Activated T-helper 1 cell treated with anti-CD3 and anti-CD28 coated beads, Interleukin-12 subunit alpha, Interleukin-12 subunit beta, Interleukin-2, Interleukin-4 antibody, amounts not matched to agents 30 ng/mL and 10 ng/mL and 1 ng/mL, durations not matched to agents 14 hours and 24 hours and 36 hours (primary cell): ENCODE measurements at regions of chr1 and their contacts with region 1.

Region 1: DNA sequence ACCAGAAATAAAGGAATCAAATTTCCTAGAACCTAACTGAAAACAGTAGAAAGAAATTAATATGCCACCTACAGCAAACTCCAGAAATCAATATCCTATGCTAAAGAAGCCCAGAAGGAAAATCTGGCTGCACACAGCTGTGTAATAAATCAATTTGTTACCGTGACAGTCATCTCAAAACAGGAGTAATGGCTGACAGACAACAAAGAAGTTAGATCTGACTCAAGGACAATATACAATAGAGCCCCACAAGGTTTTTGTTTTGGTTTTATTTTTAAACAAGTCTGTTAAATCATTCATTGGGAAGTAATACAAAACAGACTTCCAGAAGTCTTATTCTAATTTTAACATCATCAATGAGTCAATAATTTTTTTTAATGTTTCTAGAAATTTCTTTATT is 168.4 kb downstream of the RERE start:
- DNase-seq: no peak
- H3K4me3 Mint-ChIP-seq: no peak overlapping the region
- H3K27ac Mint-ChIP-seq: no peak overlapping the region
- H3K4me1 Mint-ChIP-seq: peaks cover 76% of the 10 kb centered on the region
- H3K27me3 Mint-ChIP-seq: no peaks in the 10 kb centered on the region

Region 2: DNA sequence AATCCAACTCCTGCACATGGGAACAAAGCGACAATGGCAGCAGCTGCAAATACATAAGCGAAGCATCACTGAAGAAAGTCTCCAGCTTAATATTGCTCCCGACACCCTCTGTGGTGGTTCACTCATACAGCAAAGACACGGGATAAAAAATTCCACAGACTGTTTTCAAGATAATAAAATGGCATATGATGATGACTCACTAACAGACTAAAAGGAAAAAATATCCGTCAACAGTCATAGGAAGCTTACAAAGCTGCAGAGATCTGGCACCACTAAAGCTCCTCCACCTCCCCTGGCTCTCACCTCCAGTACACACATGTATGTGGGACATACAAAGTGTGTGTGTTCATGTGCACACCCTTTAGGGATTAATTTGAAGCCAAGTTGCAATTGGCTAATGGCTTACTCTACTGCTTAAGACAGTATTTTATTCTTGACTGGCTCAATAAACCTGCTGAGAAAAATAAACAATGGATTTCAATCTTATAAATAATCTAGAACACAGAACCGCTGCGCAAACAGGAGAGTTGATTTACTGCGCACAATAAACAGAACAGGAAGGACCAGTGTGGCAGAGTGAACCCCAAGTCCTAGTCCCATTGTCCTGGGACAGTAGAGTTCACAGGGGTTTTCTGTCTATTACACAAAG is 236.7 kb before region 1 on chr1:
- intact Hi-C with region 1: no loop called
- DNase-seq: no peak
- H3K4me3 Mint-ChIP-seq: no peak overlapping the region
- H3K27ac Mint-ChIP-seq: no peak overlapping the region
- H3K4me1 Mint-ChIP-seq: peaks cover 49% of the 10 kb centered on the region
- H3K27me3 Mint-ChIP-seq: no peaks in the 10 kb centered on the region

Region 3: DNA sequence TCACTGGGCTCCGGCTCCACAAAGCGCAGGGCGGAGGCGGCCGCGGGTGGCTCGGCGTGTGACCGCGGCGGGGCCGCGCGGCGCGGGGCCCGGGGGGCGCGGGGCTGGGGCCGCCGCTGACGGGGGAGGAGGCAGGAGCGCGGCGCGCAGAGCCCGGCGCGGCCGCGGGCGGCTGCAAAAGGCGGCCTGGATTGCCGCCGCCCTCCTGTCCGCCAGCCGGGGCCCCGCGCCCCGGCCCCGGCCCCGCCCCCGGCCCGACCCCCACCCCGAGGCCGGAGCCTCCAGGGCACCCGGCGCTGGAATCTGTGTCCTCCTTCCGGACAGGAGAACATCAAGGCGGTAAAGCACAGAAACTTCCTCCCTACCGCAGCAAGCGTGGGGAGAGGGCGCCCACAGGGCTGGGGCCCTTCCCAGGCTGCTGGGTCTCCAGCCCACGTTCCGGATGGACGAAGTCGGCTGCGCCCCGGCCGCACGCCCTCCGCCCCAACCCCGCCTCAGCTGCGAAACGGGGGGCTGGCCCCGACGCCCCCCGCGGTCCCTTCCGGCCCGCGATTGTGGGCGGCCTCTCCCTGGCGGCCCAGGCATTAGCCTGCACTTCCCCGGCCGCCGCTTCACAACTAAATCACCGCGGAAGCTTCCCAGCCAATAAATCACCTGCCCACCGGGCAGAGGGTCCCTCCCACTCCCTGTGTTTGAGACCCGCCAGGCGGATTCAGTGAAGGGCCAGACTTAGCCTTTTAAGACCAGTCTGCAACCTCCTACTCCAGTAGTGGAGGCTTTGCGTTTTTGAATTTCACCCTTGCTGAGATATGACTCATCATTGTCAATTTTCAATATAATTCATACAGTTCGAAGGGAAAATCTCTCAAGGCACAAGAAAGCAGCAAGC is 225.1 kb before region 1 on chr1:
- intact Hi-C with region 1: loop called (anchors 5 kb)
- DNase-seq: peak; percentile 32
- H3K4me3 Mint-ChIP-seq: peak overlapping the region; percentile 91
- H3K27ac Mint-ChIP-seq: peak overlapping the region; percentile 92
- H3K4me1 Mint-ChIP-seq: peaks cover 44% of the 10 kb centered on the region
- H3K27me3 Mint-ChIP-seq: no peaks in the 10 kb centered on the region

Region 4: DNA sequence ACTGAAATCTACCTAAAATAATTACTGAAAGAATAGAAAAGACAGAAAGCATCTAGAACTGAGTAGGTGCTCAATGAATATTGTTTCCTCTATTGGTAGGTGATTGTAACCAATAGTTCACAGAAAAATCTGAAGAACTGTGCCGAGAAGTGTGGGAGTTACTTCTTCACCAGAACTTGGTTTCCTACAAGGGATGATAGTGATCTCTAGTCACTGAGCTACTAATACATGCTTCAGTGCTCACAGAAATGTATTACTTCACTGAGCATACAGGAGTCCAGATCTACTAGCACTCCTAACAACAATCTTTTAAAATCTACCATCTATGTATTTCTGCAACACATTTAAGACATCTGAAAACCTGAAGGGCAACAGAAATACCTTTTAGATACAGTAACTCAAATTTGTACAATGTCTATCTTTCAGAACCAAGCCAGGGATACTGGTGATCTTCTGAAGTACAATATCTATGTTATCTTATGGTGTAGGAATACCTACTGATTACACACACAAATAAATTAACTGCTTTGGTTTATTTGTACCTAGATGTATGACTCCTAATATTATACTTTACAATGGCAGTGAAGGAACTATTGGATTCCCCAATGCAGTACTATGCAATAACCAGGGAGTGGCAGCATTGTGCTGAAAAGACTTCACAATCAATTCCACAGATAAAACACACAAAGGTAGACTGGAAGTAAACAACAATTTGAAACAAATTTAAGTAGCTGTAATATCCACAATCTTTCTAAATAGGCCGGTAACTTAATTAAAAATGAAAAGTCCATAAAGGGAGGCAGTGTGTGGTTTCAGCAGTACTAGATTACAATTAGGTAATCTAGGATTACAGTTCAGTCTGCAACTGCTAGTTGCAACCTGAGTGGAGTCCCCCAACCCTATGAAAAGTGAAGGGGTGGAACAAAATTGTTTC is 88.1 kb before region 1 on chr1:
- intact Hi-C with region 1: loop called (anchors 1 kb)
- DNase-seq: no peak
- H3K4me3 Mint-ChIP-seq: peak overlapping the region; percentile 32
- H3K27ac Mint-ChIP-seq: peak overlapping the region; percentile 78
- H3K4me1 Mint-ChIP-seq: peaks cover 57% of the 10 kb centered on the region
- H3K27me3 Mint-ChIP-seq: no peaks in the 10 kb centered on the region

Region 5: GRCh38 chr1:8580566-8580965 is 68.5 kb before region 1 on chr1:
- intact Hi-C with region 1: no loop called
- DNase-seq: no peak
- H3K4me3 Mint-ChIP-seq: no peak overlapping the region
- H3K27ac Mint-ChIP-seq: no peak overlapping the region
- H3K4me1 Mint-ChIP-seq: no peaks in the 10 kb centered on the region
- H3K27me3 Mint-ChIP-seq: no peaks in the 10 kb centered on the region

Region 6: DNA sequence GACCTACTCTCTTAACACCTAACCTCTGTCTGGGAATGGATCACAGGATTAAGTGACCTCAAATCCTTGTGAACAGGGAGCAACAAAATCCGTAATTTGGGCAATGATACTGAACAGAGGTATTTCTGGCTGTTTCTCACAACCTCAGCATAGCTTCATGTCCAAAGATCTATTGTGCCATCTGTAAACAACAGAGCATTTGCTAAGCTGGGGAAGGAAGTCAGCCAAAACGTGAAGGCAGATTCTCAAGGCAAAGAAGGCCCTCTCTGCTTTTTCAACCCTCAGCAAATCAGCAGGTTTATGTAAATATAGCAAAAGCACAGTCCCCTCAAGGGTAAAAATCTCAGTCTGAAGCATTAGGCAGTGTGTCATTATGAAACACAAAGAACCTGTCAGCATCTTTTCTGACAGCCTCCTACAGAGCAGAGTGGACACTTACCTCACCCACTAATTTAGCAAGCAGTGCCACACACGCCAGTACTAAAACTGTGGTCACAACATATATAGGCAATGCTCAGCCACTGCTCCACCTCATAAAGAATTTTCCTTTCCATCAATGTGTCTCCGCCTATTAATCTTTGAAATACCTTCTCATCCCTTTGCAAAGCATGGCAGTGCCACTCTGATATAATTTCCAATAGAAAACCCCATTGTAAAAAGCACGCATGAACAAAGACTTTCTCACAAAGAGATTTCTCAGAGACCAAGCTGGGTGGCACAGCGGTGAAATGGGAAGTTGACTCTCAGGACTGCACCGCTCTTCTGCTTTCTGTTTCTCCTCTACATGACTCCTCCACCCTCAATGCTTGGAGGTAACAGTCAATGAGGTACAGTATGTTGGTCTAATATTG is 19.6 kb before region 1 on chr1:
- intact Hi-C with region 1: loop called (anchors 2 kb)
- DNase-seq: no peak
- H3K4me3 Mint-ChIP-seq: no peak overlapping the region
- H3K27ac Mint-ChIP-seq: peak overlapping the region; percentile 2
- H3K4me1 Mint-ChIP-seq: peaks cover 62% of the 10 kb centered on the region
- H3K27me3 Mint-ChIP-seq: no peaks in the 10 kb centered on the region

Region 7: DNA sequence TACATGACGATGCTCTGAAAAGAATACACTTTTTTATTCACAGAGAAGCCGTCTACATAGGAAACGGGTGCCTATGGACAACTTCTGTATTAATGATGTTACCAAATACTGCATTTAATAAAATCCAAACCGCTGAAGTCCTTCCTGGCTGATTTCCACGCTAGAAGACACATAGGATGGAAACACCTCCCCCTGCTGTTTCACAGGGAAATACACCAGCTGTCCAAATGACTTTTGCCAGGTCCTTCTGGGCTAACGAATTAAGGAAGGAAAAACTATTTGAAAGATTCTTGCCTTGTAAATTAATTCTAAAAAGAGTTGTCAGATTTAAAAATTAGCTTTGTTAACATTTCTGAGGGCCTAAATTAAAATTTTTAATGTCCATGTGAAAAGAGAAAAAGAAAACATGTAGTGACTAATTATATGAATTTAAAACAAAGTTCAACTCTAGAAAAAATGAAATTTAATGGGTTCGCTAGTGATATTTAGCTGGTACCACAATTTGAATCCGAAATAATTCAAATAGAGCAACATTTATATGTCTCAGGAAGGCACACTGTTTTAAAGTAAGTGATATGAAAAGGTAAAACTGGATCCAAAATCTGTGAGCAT is 22.4 kb after region 1 on chr1:
- intact Hi-C with region 1: loop called (anchors 1 kb)
- DNase-seq: no peak
- H3K4me3 Mint-ChIP-seq: no peak overlapping the region
- H3K27ac Mint-ChIP-seq: no peak overlapping the region
- H3K4me1 Mint-ChIP-seq: peaks cover 49% of the 10 kb centered on the region
- H3K27me3 Mint-ChIP-seq: no peaks in the 10 kb centered on the region

Region 8: GRCh38 chr1:8702850-8703810 is 54.1 kb after region 1 on chr1:
- intact Hi-C with region 1: loop called (anchors 1 kb)
- DNase-seq: peak; percentile 69
- H3K4me3 Mint-ChIP-seq: peak overlapping the region; percentile 97
- H3K27ac Mint-ChIP-seq: peak overlapping the region; percentile 89
- H3K4me1 Mint-ChIP-seq: peaks cover 58% of the 10 kb centered on the region
- H3K27me3 Mint-ChIP-seq: peaks cover 3% of the 10 kb centered on the region